ENCODE measurements at regions of chr6 and their contacts with region 1.

Region 1: GRCh38 chr6:136439514-136440190 is 110.6 kb downstream of the MAP7 start:
- DNase-seq: no peak
- H3K4me3 ChIP-seq: no peak overlapping the region
- H3K27ac ChIP-seq: peak overlapping the region; percentile 47
- H3K4me1 ChIP-seq: peaks cover 20% of the 10 kb centered on the region
- H3K27me3 ChIP-seq: no peaks in the 10 kb centered on the region
- CTCF ChIP-seq: no peak

Region 2: GRCh38 chr6:135994857-135995544 is 444.7 kb before region 1 on chr6:
- CTCF ChIA-PET with region 1: no interaction called
- dilution Hi-C with region 1: no loop called
- in situ Hi-C with region 1: no loop called
- intact Hi-C with region 1: no loop called
- DNase-seq: peak; percentile 62
- H3K4me3 ChIP-seq: no peak overlapping the region
- H3K27ac ChIP-seq: no peak overlapping the region
- H3K4me1 ChIP-seq: peaks cover 7% of the 10 kb centered on the region
- H3K27me3 ChIP-seq: peaks cover 6% of the 10 kb centered on the region
- CTCF ChIP-seq: no peak

Region 3: GRCh38 chr6:136387316-136387715 is 52.3 kb before region 1 on chr6:
- CTCF ChIA-PET with region 1: no interaction called
- dilution Hi-C with region 1: loop called (anchors 5 kb)
- in situ Hi-C with region 1: no loop called
- intact Hi-C with region 1: no loop called
- DNase-seq: no peak
- H3K4me3 ChIP-seq: no peak overlapping the region
- H3K27ac ChIP-seq: no peak overlapping the region
- H3K4me1 ChIP-seq: no peaks in the 10 kb centered on the region
- H3K27me3 ChIP-seq: no peaks in the 10 kb centered on the region
- CTCF ChIP-seq: no peak

Region 4: GRCh38 chr6:136403166-136403980 is 36.3 kb before region 1 on chr6:
- CTCF ChIA-PET with region 1: no interaction called
- dilution Hi-C with region 1: no loop called
- in situ Hi-C with region 1: no loop called
- intact Hi-C with region 1: no loop called
- DNase-seq: peak; percentile 98
- H3K4me3 ChIP-seq: peak overlapping the region in 1 of 3 experiments; percentile 14
- H3K27ac ChIP-seq: peak overlapping the region; percentile 98
- H3K4me1 ChIP-seq: peaks cover 21% of the 10 kb centered on the region
- H3K27me3 ChIP-seq: no peaks in the 10 kb centered on the region
- CTCF ChIP-seq: no peak

Region 5: GRCh38 chr6:136487749-136488425 is 48.2 kb after region 1 on chr6:
- CTCF ChIA-PET with region 1: no interaction called
- dilution Hi-C with region 1: no loop called
- in situ Hi-C with region 1: no loop called
- intact Hi-C with region 1: loop called (anchors 5 kb)
- DNase-seq: no peak
- H3K4me3 ChIP-seq: no peak overlapping the region
- H3K27ac ChIP-seq: no peak overlapping the region
- H3K4me1 ChIP-seq: peaks cover 10% of the 10 kb centered on the region
- H3K27me3 ChIP-seq: no peaks in the 10 kb centered on the region
- CTCF ChIP-seq: no peak

Region 6: DNA sequence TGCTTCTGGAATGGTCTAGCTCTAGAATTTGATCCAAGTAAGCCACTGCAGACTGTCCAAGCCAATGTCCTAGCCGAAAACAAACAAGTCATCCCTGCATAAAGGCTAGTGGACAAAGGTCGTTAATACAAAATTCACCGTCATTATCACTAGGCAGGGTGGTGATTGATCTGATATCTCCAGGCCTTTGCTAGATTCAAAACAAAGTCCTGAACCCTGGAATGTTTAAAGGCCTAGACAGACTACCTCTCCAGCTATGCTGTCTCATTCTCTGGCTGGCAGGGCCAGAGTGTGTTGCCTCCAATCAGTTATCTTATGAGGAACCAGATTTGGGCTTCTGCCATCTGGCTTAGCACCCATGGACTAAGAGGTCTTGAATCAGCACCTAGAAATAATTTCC is 72.3 kb after region 1 on chr6:
- CTCF ChIA-PET with region 1: no interaction called
- dilution Hi-C with region 1: no loop called
- in situ Hi-C with region 1: no loop called
- intact Hi-C with region 1: no loop called
- DNase-seq: no peak
- H3K4me3 ChIP-seq: no peak overlapping the region
- H3K27ac ChIP-seq: no peak overlapping the region
- H3K4me1 ChIP-seq: peaks cover 22% of the 10 kb centered on the region
- H3K27me3 ChIP-seq: no peaks in the 10 kb centered on the region
- CTCF ChIP-seq: no peak

Measured in mammary epithelial cell (primary cell).